PC-3 (cell line): ENCODE measurements at regions of chr11 and their contacts with region 1.

Region 1: DNA sequence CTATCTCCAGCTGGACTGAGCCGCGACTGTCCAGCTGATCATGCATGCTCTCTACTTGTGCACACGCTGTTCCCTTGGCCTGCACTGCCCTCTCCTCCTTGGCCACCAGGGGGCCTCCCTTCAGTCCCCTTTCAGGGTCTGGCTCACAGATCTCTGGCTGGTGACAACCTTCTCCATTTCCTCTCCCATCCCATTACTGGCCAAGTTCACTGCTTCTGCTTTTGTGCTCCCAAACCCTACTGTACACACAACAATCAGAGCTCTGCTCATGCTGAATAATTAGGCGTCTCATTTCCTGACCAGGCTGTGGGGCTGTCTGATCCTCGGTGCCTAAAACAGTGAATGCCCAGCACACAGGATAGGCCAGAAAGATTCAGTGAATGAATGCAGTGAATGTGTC is 224.0 kb upstream of the NARS2 start:
- DNase-seq: peak; percentile 85
- ATAC-seq: peak; percentile 1; the same call in 1 of the 2 replicates
- H3K4me3 ChIP-seq: no peak overlapping the region
- H3K27ac ChIP-seq: peak overlapping the region; percentile 96
- H3K4me1 ChIP-seq: peaks cover 83% of the 10 kb centered on the region
- H3K27me3 ChIP-seq: no peaks in the 10 kb centered on the region
- CTCF ChIP-seq: peak; percentile 96

Region 2: GRCh38 chr11:77908835-77909234 is 889.8 kb before region 1 on chr11:
- CTCF ChIA-PET with region 1: no interaction called
- POLR2A ChIA-PET with region 1: no interaction called
- intact Hi-C with region 1: no loop called
- DNase-seq: no peak
- ATAC-seq: no peak
- H3K4me3 ChIP-seq: no peak overlapping the region
- H3K27ac ChIP-seq: no peak overlapping the region
- H3K4me1 ChIP-seq: peaks cover 4% of the 10 kb centered on the region
- H3K27me3 ChIP-seq: no peaks in the 10 kb centered on the region
- CTCF ChIP-seq: no peak

Region 3: GRCh38 chr11:78645226-78646202 is 153.1 kb before region 1 on chr11:
- CTCF ChIA-PET with region 1: interaction called, 8 read pairs
- POLR2A ChIA-PET with region 1: interaction called, 5 read pairs
- intact Hi-C with region 1: loop called (anchors 1 kb)
- DNase-seq: peak; percentile 96
- ATAC-seq: peak; percentile 73
- H3K4me3 ChIP-seq: peak overlapping the region; percentile 54
- H3K27ac ChIP-seq: peak overlapping the region; percentile 78
- H3K4me1 ChIP-seq: peaks cover 22% of the 10 kb centered on the region
- H3K27me3 ChIP-seq: no peaks in the 10 kb centered on the region
- CTCF ChIP-seq: peak; percentile 99

Region 4: GRCh38 chr11:78715639-78716311 is 82.9 kb before region 1 on chr11:
- CTCF ChIA-PET with region 1: interaction called, 20 read pairs
- POLR2A ChIA-PET with region 1: interaction called, 8 read pairs
- intact Hi-C with region 1: loop called (anchors 1 kb)
- DNase-seq: peak; percentile 99
- ATAC-seq: peak; percentile 90
- H3K4me3 ChIP-seq: no peak overlapping the region
- H3K27ac ChIP-seq: peak overlapping the region; percentile 77
- H3K4me1 ChIP-seq: peaks cover 33% of the 10 kb centered on the region
- H3K27me3 ChIP-seq: no peaks in the 10 kb centered on the region
- CTCF ChIP-seq: peak; percentile 98

Region 5: GRCh38 chr11:78822931-78823423 is 24.3 kb after region 1 on chr11:
- CTCF ChIA-PET with region 1: interaction called, 4 read pairs
- POLR2A ChIA-PET with region 1: no interaction called
- intact Hi-C with region 1: loop called (anchors 1 kb)
- DNase-seq: no peak
- ATAC-seq: no peak
- H3K4me3 ChIP-seq: no peak overlapping the region
- H3K27ac ChIP-seq: peak overlapping the region; percentile 93
- H3K4me1 ChIP-seq: peaks cover 29% of the 10 kb centered on the region
- H3K27me3 ChIP-seq: no peaks in the 10 kb centered on the region
- CTCF ChIP-seq: no peak

Region 6: GRCh38 chr11:78982473-78982872 is 183.8 kb after region 1 on chr11:
- CTCF ChIA-PET with region 1: no interaction called
- POLR2A ChIA-PET with region 1: no interaction called
- intact Hi-C with region 1: no loop called
- DNase-seq: no peak
- ATAC-seq: no peak
- H3K4me3 ChIP-seq: no peak overlapping the region
- H3K27ac ChIP-seq: no peak overlapping the region
- H3K4me1 ChIP-seq: no peaks in the 10 kb centered on the region
- H3K27me3 ChIP-seq: no peaks in the 10 kb centered on the region
- CTCF ChIP-seq: no peak

Region 7: DNA sequence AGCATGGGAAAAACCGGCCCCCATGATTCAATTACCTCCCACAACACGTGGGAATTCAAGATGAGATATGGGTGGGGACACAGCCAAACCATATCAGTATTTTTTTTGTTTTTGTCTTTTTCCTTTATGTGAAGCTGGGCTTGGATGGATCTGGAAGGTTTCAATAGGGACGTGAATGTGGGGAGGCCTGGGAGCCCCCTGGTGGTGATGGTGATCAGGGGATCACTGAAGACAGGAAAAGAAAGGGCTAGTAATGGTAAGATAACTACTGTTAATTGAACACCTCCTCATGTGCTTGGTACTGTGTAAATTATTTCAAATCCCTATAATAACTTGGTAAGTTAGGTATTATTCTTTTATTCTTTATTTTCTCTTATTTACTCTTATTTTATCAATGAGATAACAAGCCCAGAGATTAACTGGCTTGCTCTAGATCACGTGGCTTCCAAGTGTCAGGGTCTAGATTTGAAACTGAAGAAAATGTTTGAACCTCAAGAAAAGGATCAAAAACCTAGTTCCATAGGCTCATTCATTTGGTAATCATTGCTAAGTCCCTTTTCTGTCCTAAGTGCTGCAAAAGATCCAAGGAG is 278.0 kb after region 1 on chr11:
- CTCF ChIA-PET with region 1: interaction called, 3 read pairs
- POLR2A ChIA-PET with region 1: no interaction called
- intact Hi-C with region 1: loop called (anchors 5 kb)
- DNase-seq: peak; percentile 71
- ATAC-seq: peak; percentile 82
- H3K4me3 ChIP-seq: no peak overlapping the region
- H3K27ac ChIP-seq: no peak overlapping the region
- H3K4me1 ChIP-seq: no peaks in the 10 kb centered on the region
- H3K27me3 ChIP-seq: no peaks in the 10 kb centered on the region
- CTCF ChIP-seq: peak; percentile 81